ENCODE measurements at regions of chr9 and their contacts with region 1.

Region 1: DNA sequence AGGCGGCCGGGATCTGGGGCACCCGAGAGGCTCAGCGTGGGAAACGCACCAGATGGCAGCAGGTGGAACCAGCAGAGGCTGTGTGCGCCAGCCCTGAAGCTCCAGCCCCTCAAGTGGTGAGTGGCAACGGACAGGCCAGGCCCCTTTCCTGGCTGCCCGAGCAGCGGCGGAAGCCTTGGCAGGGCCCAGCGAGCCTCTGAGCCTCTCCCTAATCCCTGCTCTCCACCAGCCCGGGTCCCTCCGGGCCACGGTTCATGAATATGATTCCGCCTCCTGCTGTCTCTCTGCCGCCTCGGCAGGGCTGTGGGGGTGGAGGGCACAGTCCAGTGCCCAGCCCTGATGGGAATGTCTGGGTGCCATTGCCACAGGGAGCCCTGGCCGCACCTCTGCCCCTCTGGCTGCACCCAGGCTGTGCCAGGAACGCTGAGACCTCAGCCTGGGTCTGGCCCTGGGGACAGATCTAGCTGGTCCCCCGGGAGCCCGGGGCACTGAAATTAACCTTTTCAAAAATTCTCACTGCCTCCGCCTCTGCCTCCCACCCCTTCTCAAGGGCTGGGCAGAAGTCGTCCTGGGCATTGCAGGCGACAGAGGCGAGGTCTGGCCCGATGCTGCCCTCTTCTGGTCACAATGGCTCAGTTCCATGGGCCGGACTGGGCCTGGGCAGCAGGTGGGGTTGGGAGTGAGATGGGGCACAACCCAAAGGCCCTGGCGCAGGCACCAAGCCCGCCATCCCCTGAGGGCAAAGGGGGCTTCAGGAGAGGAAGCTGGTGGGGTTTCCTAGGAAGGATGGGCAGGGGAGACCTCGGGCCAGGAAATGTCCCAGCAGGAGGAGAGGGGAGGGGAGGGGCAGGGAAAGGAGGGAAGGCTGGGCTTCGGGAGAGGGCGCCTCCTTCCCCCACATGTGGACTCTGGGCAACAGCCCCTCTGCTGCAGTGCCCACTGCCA is 20.3 kb downstream of the CCDC187 start:
- DNase-seq: peak; percentile 91 to 97 (median 96)
- ATAC-seq: peak; percentile 88 to 94 (median 90)
- H3K4me3 ChIP-seq: peak overlapping the region in 2 of 4 donors; percentile 22 to 24
- H3K27ac ChIP-seq: peak overlapping the region; percentile 72 to 88 (median 83)
- H3K4me1 ChIP-seq: peaks cover 10 to 12% (median 12%) of the 10 kb centered on the region in 3 donors
- H3K27me3 ChIP-seq: no peaks in the 10 kb centered on the region
- CTCF ChIP-seq: peak; percentile 75 to 85 (median 83)

Region 2: DNA sequence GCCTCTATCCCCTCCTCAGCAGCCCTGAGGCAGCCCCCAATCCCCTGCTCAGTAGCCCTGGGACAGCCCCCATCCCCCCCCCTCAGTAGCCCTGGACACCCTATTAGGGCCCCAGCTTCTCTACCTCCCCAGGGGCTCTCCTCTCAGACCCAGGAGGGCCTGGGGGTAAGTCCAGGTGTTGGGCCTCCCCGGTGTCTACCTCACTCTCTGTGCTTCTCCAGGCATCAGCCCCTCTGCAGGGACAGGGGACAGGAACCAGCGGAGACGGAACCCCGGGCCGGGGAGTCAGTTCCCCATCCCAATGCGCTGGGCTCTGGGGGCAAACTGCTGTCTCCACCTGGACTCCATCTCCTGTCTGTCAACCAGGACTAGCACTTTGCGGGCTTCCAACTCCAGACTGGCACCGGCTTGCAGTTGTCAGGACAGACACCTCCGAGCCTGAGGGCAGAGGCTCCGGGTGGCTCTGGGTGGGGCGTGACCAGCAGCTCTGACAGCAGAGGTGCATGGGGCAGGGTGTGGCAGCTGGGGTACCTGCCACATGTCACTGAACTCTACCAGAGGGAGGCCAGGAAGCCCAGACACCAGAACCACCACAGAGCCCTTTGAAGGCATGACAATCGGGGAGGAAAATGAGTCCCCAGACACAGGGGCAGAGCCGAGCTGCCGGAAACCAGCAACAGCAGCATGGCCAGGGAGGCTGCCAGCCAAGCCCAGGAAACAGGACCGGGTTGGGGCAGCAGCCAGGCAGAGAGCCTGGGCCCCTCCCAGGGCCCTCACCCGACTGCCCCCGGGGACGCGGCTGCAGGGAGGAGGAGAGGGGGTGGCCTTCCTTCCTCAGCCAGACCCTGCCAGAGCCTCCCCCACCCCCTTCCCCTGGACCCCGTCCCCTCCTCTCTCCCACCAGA is 304.7 kb before region 1 on chr9:
- intact Hi-C with region 1: no loop called
- DNase-seq: peak in 1 of 6 donors; percentile 63
- ATAC-seq: peak in 1 of 4 donors; percentile 23
- H3K4me3 ChIP-seq: no peak overlapping the region
- H3K27ac ChIP-seq: no peak overlapping the region
- H3K4me1 ChIP-seq: no peaks in the 10 kb centered on the region
- H3K27me3 ChIP-seq: no peaks in the 10 kb centered on the region
- CTCF ChIP-seq: no peak

Region 3: DNA sequence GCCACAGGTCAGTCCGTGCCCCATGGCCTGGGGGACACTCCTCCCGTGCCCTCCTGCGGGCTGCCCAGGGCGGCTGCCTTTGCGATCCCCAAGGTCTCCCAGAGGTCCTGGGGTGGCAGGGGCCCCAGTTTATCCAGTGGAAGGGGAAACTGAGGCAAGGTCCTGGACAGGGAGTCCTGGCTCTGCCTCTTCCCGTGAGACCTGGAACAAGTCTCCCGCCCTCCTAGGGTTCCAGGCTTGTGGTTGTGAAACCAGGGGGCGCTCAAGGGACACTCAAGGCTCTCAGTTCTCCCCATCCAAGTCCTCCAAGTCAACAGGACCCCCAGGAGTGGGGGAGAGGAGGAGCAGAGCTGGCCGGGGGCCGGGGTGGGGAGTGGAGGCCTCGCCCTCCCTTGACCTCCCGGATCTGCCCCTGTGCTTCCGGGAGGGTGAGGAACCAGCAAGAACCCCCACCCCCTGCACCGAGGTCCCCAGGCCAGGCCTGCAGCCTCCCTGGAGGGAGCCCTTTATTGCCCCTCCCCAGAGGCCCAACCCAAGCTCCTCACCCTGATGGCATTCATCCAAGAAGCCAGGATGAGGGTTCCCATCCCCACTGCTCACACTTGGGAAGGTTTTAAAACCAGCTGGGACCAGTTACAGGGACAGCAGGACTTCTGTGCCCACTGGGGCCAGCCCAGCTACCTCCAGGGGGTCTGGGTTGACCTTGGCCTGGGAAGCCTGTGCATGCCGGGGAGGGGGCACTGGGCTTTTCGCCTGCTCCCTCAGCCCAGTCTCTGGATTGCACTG is 140.2 kb before region 1 on chr9:
- intact Hi-C with region 1: loop called in 1 of 3 experiments (anchors 10 kb)
- DNase-seq: peak in 2 of 6 donors; percentile 52 to 58
- ATAC-seq: peak in 2 of 4 donors; percentile 29 to 37
- H3K4me3 ChIP-seq: no peak overlapping the region
- H3K27ac ChIP-seq: no peak overlapping the region
- H3K4me1 ChIP-seq: no peaks in the 10 kb centered on the region
- H3K27me3 ChIP-seq: no peaks in the 10 kb centered on the region
- CTCF ChIP-seq: peak in 1 of 4 donors; percentile 8